ENCODE measurements at regions of chr12 and their contacts with region 1.

Region 1: DNA sequence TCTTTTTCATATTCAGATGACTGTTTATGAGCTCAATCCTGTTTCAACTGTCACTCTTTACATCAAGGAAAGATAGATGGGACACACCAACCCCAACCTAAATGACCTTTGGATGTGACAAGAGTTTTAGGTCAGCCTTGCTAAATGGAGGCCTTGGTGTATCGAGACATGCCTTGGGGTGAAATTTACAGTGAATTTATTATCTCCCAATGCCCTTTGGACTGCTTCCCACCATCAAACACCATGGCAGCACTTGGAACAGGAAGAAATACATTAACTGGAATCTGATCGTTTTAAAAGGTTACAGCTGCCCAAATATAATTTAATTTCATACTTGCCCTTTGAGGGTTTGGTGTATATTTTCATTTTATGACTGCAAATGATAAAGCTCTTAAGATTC is 327.6 kb downstream of the SOX5 start:
- DNase-seq: no peak
- ATAC-seq: no peak
- H3K4me3 ChIP-seq: no peak overlapping the region
- H3K27ac ChIP-seq: no peak overlapping the region
- H3K4me1 ChIP-seq: no peaks in the 10 kb centered on the region
- H3K27me3 ChIP-seq: no peaks in the 10 kb centered on the region
- CTCF ChIP-seq: no peak

Region 2: GRCh38 chr12:23464241-23464812 is 157.6 kb before region 1 on chr12:
- intact Hi-C with region 1: no loop called
- DNase-seq: no peak
- ATAC-seq: no peak
- H3K4me3 ChIP-seq: no peak overlapping the region
- H3K27ac ChIP-seq: no peak overlapping the region
- H3K4me1 ChIP-seq: no peaks in the 10 kb centered on the region
- H3K27me3 ChIP-seq: no peaks in the 10 kb centered on the region
- CTCF ChIP-seq: no peak

Region 3: GRCh38 chr12:23585782-23586163 is 36.1 kb before region 1 on chr12:
- intact Hi-C with region 1: no loop called
- DNase-seq: no peak
- ATAC-seq: no peak
- H3K4me3 ChIP-seq: no peak overlapping the region
- H3K27ac ChIP-seq: no peak overlapping the region
- H3K4me1 ChIP-seq: no peaks in the 10 kb centered on the region
- H3K27me3 ChIP-seq: no peaks in the 10 kb centered on the region
- CTCF ChIP-seq: no peak

Region 4: GRCh38 chr12:23686095-23686494 is 64.2 kb after region 1 on chr12:
- intact Hi-C with region 1: loop called in 1 of 10 experiments (anchors 10 kb)
- DNase-seq: no peak
- ATAC-seq: no peak
- H3K4me3 ChIP-seq: no peak overlapping the region
- H3K27ac ChIP-seq: no peak overlapping the region
- H3K4me1 ChIP-seq: no peaks in the 10 kb centered on the region
- H3K27me3 ChIP-seq: no peaks in the 10 kb centered on the region
- CTCF ChIP-seq: no peak

Region 5: GRCh38 chr12:23927907-23928306 is 306.0 kb after region 1 on chr12:
- intact Hi-C with region 1: no loop called
- DNase-seq: no peak
- ATAC-seq: no peak
- H3K4me3 ChIP-seq: no peak overlapping the region
- H3K27ac ChIP-seq: no peak overlapping the region
- H3K4me1 ChIP-seq: no peaks in the 10 kb centered on the region
- H3K27me3 ChIP-seq: no peaks in the 10 kb centered on the region
- CTCF ChIP-seq: no peak

Measured in heart right ventricle (tissue), 16 donors.